ENCODE measurements at regions of chr1 and their contacts with region 1.

Region 1: DNA sequence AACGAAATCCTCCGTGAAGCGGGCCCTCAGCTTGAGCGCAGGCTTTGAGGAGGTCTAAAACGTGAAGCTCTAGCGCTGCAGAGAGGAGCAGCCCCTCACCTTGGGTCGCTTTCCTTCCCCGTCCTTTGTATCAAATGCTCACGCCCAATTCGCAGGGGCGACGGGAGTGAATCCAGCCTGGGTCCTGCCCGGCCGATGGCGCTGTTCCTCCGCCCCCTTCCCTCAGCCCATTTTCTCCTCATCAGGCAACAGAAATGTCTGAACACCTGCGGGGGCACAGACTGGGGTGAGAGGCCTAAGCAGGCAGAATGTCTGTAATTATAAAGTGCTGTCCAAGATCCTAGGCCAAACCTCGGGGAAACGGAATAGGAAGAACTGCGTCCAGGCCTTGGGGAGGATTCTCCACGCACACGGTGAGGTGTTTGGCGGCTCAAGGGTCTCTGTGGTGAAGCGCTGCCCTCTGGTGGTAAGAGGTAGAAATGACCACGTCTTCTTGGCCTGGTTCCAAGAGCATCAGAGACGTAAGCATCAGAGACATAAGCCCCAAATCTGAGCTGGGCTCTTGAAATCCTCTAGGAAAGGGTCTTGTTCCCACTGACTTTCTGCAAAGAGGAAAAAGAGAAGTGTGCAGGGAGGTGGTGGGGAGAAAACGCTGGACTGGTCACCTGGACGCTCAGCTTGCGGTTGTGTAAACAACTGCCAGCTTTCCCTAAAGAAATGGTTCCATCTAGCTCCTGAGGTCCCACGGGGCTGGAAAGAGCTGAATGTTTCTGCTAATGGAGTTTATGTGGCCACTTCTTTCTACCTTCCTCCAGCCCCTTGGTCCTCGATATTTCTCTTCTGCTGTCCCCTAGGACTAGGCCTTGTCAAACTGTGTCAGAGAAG is 92.1 kb upstream of the CD53 start:
- DNase-seq: peak; percentile 59 to 88 (median 76)
- ATAC-seq: peak; percentile 81
- H3K4me3 ChIP-seq: no peak overlapping the region
- H3K4me3 Mint-ChIP-seq: no peak overlapping the region
- H3K27ac ChIP-seq: no peak overlapping the region
- H3K27ac Mint-ChIP-seq: no peak overlapping the region
- H3K4me1 ChIP-seq: peaks cover 39% of the 10 kb centered on the region
- H3K4me1 Mint-ChIP-seq: peaks cover 46% of the 10 kb centered on the region
- H3K27me3 ChIP-seq: no peaks in the 10 kb centered on the region
- H3K27me3 Mint-ChIP-seq: peaks cover 5% of the 10 kb centered on the region
- CTCF ChIP-seq: peak; percentile 81

Region 2: DNA sequence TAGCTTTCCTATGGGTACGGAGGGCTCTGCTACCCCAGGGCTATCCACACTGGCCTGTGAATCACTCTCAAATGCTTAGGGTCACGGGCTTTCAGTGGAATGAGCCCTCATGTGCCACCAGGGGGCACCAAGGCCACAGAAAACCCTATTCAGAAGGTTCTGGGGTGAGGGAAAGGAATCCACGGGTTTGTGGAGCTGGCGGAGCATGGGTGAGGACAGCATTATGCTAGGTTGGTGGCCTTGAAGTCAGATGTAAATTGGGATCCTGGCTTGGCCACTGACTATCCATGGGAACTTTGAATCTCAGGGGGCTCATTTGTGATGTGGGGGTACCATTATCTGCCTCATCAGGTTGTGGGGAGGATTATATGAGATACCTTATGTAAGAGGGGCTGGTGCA is 368.3 kb before region 1 on chr1:
- CTCF ChIA-PET with region 1: no interaction called
- POLR2A ChIA-PET with region 1: no interaction called
- intact Hi-C with region 1: loop called (anchors 2 to 10 kb)
- DNase-seq: peak; percentile 25 to 72 (median 60)
- ATAC-seq: peak; percentile 41
- H3K4me3 ChIP-seq: no peak overlapping the region
- H3K4me3 Mint-ChIP-seq: no peak overlapping the region
- H3K27ac ChIP-seq: no peak overlapping the region
- H3K27ac Mint-ChIP-seq: no peak overlapping the region
- H3K4me1 ChIP-seq: peaks cover 6% of the 10 kb centered on the region
- H3K4me1 Mint-ChIP-seq: peaks cover 18% of the 10 kb centered on the region
- H3K27me3 ChIP-seq: no peaks in the 10 kb centered on the region
- H3K27me3 Mint-ChIP-seq: no peaks in the 10 kb centered on the region
- CTCF ChIP-seq: peak; percentile 64

Region 3: GRCh38 chr1:110605901-110606656 is 174.8 kb before region 1 on chr1 and contains the start of gene KCNA2:
- CTCF ChIA-PET with region 1: interaction called, 38 read pairs
- POLR2A ChIA-PET with region 1: no interaction called
- intact Hi-C with region 1: no loop called
- DNase-seq: peak in 3 of 9 experiments; percentile 22 to 50 (median 29)
- ATAC-seq: peak; percentile 37
- H3K4me3 ChIP-seq: peak within 1 kb of the TSS; percentile 55 to 68
- H3K4me3 Mint-ChIP-seq: peak within 1 kb of the TSS; percentile 81
- H3K27ac ChIP-seq: no peak within 1 kb of the TSS
- H3K27ac Mint-ChIP-seq: no peak within 1 kb of the TSS
- H3K4me1 ChIP-seq: peaks cover 14% of the 10 kb centered on the region
- H3K4me1 Mint-ChIP-seq: peaks cover 20% of the 10 kb centered on the region
- H3K27me3 ChIP-seq: peaks cover 20 to 25% of the 10 kb centered on the region in 2 experiments
- H3K27me3 Mint-ChIP-seq: peaks cover 54% of the 10 kb centered on the region
- CTCF ChIP-seq: no peak
- total RNA-seq, gene KCNA2: 0.39 to 0.46 TPM

Region 4: GRCh38 chr1:110766025-110766647 is 14.7 kb before region 1 on chr1:
- CTCF ChIA-PET with region 1: interaction called, 119 read pairs
- POLR2A ChIA-PET with region 1: no interaction called
- intact Hi-C with region 1: loop called in 1 of 2 experiments (anchors 1 kb)
- DNase-seq: peak; percentile 11 to 86 (median 55)
- ATAC-seq: peak; percentile 87
- H3K4me3 ChIP-seq: no peak overlapping the region
- H3K4me3 Mint-ChIP-seq: no peak overlapping the region
- H3K27ac ChIP-seq: no peak overlapping the region
- H3K27ac Mint-ChIP-seq: no peak overlapping the region
- H3K4me1 ChIP-seq: no peaks in the 10 kb centered on the region
- H3K4me1 Mint-ChIP-seq: peaks cover 2% of the 10 kb centered on the region
- H3K27me3 ChIP-seq: no peaks in the 10 kb centered on the region
- H3K27me3 Mint-ChIP-seq: peaks cover 10% of the 10 kb centered on the region
- CTCF ChIP-seq: peak; percentile 95

Region 5: DNA sequence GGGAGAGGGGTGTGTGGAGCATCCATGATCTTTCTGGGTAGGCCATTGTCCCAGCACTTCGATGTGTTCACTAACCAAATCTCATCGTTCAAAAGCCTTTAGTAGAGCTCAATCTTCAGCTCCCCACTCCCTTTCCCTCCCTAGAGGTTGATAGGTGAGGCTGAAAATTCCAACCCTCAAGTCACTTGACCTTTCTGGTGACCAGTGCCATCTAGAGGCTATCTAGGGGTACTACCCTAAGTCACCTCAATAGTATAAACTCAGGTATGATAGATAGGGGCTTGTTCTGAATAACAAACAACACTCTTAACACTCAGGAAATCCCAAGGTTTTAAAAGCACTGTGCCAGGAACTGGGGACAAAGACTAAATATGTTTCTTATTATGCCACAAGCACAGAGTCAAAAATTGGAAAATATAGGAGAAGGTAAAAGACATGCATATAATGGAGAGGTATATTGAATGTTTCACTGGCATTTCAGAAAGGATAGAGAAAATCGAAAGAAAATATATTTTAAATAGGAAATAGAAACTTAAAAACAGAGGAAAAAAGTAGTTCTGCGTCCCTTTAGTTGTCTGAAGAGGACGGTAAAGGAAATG is 49.2 kb after region 1 on chr1:
- CTCF ChIA-PET with region 1: interaction called, 117 read pairs
- POLR2A ChIA-PET with region 1: interaction called, 18 read pairs
- intact Hi-C with region 1: loop called (anchors 1 to 2 kb)
- DNase-seq: peak in 6 of 9 experiments; percentile 8 to 73 (median 28)
- ATAC-seq: peak; percentile 97
- H3K4me3 ChIP-seq: no peak overlapping the region
- H3K4me3 Mint-ChIP-seq: no peak overlapping the region
- H3K27ac ChIP-seq: no peak overlapping the region
- H3K27ac Mint-ChIP-seq: no peak overlapping the region
- H3K4me1 ChIP-seq: peaks cover 5% of the 10 kb centered on the region
- H3K4me1 Mint-ChIP-seq: peaks cover 15% of the 10 kb centered on the region
- H3K27me3 ChIP-seq: no peaks in the 10 kb centered on the region
- H3K27me3 Mint-ChIP-seq: no peaks in the 10 kb centered on the region
- CTCF ChIP-seq: peak; percentile 91

Region 6: DNA sequence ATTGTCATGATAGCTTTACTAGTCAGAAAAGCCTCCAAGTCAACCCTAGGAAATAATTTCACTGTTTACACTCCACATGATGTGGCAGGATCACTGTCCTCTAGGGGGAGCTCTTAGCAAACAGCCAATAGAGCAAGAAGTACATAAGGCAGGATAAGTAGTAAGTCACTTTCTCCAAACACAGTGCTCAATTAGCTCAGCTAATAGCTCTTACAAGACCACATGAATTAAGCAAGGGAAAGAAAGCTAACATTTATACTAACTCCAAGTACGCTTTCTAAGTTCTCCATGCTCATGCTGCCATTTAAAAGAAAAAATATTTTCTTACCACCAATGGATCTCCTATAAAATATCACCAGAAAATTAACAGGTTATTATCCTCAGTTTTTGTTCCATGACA is 249.7 kb after region 1 on chr1:
- CTCF ChIA-PET with region 1: interaction called, 3 read pairs
- POLR2A ChIA-PET with region 1: no interaction called
- intact Hi-C with region 1: loop called (anchors 1 to 5 kb)
- DNase-seq: peak in 8 of 9 experiments; percentile 37 to 74 (median 56)
- ATAC-seq: no peak
- H3K4me3 ChIP-seq: no peak overlapping the region
- H3K4me3 Mint-ChIP-seq: no peak overlapping the region
- H3K27ac ChIP-seq: no peak overlapping the region
- H3K27ac Mint-ChIP-seq: no peak overlapping the region
- H3K4me1 ChIP-seq: no peaks in the 10 kb centered on the region
- H3K4me1 Mint-ChIP-seq: no peaks in the 10 kb centered on the region
- H3K27me3 ChIP-seq: no peaks in the 10 kb centered on the region
- H3K27me3 Mint-ChIP-seq: peaks cover 9% of the 10 kb centered on the region
- CTCF ChIP-seq: peak; percentile 81

Region 7: GRCh38 chr1:112488141-112488540 is 1707.3 kb after region 1 on chr1:
- CTCF ChIA-PET with region 1: no interaction called
- POLR2A ChIA-PET with region 1: no interaction called
- intact Hi-C with region 1: no loop called
- DNase-seq: no peak
- ATAC-seq: no peak
- H3K4me3 ChIP-seq: no peak overlapping the region
- H3K4me3 Mint-ChIP-seq: no peak overlapping the region
- H3K27ac ChIP-seq: no peak overlapping the region
- H3K27ac Mint-ChIP-seq: no peak overlapping the region
- H3K4me1 ChIP-seq: no peaks in the 10 kb centered on the region
- H3K4me1 Mint-ChIP-seq: no peaks in the 10 kb centered on the region
- H3K27me3 ChIP-seq: no peaks in the 10 kb centered on the region
- H3K27me3 Mint-ChIP-seq: peaks cover 29% of the 10 kb centered on the region
- CTCF ChIP-seq: no peak

Measured in CD8-positive, alpha-beta T cell (primary cell).